Dorsolateral prefrontal cortex (tissue), 120 donors: ENCODE measurements at regions of chr22 and their contacts with region 1.

Region 1: DNA sequence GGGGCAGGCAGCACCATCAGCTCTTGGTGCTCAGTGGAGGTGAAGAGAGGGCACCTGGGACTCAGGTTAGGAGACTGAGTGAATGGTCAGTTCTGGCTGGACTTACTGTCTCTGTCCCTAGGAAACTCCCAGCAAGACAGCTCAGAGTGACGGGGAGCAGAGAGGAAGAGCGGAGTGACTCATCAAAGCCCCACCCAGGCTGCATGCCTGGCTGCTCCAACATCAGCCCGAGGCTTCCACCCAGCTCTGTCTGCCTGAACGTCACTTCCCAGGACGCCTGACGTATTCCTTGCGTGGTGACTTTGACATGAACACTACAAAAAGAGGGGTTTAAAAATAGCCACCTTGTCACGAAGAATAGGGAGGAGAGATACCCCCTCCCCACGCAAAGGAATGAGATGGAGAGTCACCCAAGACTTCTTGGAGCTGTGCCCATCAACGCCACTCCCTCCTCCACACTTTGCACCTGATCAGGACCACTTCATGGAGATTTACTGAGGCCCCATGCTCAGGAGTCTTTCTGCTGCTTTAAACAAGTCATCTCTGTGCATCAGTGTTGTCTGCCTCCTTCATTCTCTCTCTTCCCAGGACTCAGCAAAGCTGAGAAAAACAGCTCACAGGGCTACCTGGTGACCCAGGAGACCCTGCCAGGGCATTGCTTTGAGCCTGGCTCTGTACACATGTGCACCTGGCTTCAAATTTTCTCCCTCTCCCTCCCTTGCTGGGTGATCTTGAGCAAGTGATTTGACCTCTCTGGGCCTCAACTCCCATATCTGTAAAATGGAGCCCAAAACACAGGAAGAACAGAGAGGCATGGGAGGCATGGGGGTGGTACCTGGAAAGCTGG is 83.1 kb downstream of the MN1 start:
- DNase-seq: peak in 2 of 10 donors; percentile 25 to 62
- H3K4me3 ChIP-seq: no peak overlapping the region
- H3K27ac ChIP-seq: peak overlapping the region in 18 of 59 donors; percentile 24 to 91 (median 76)
- H3K27me3 ChIP-seq: peaks cover 0 to 11% (median 0%) of the 10 kb centered on the region in 45 donors
- CTCF ChIP-seq: no peak

Region 2: DNA sequence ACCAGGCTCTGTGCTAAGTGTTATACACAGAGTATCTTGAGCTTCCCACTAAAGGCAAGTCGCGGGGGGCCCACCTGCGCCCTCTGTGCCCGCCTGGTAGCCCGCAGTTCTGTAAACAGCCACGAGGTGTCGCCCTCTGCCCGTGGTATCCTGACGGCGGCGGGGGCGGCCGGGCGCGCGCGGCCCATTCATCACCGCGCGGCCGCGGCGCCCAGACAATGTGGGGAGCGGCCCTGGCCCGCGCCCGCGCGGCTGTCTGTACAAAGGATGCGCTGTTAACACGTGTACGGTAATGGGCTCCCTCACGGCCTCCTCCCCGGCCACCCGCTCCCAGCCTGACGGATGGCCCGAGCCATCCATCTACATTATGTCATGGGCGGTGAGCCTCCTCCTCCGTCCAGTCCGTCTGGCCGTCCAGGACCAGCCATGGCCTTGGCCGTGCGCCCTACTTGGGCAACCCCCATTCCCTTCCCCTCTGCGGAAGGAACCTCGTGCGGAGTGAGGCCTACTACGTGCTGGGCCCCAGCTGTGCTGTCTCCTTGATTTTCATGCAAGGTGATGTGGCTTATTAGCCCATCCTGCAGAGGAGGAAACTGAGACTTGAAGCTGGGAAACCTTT is 961.6 kb before region 1 on chr22:
- intact Hi-C with region 1: loop called in 1 of 2 experiments (anchors 5 kb)
- DNase-seq: peak in 9 of 10 donors; percentile 49 to 78 (median 67)
- H3K4me3 ChIP-seq: peak overlapping the region; percentile 4 to 64 (median 40)
- H3K27ac ChIP-seq: peak overlapping the region in 29 of 59 donors; percentile 8 to 79 (median 55)
- H3K27me3 ChIP-seq: no peaks in the 10 kb centered on the region
- CTCF ChIP-seq: peak in 55 of 56 donors; percentile 70 to 100 (median 94)

Region 3: GRCh38 chr22:27405672-27406388 is 312.6 kb before region 1 on chr22:
- intact Hi-C with region 1: loop called in 1 of 2 experiments (anchors 10 kb)
- DNase-seq: peak in 7 of 10 donors; percentile 18 to 70 (median 41)
- H3K4me3 ChIP-seq: no peak overlapping the region
- H3K27ac ChIP-seq: no peak overlapping the region
- H3K27me3 ChIP-seq: peaks cover 0 to 11% (median 0%) of the 10 kb centered on the region in 45 donors
- CTCF ChIP-seq: peak; percentile 24 to 83 (median 67)

Region 4: DNA sequence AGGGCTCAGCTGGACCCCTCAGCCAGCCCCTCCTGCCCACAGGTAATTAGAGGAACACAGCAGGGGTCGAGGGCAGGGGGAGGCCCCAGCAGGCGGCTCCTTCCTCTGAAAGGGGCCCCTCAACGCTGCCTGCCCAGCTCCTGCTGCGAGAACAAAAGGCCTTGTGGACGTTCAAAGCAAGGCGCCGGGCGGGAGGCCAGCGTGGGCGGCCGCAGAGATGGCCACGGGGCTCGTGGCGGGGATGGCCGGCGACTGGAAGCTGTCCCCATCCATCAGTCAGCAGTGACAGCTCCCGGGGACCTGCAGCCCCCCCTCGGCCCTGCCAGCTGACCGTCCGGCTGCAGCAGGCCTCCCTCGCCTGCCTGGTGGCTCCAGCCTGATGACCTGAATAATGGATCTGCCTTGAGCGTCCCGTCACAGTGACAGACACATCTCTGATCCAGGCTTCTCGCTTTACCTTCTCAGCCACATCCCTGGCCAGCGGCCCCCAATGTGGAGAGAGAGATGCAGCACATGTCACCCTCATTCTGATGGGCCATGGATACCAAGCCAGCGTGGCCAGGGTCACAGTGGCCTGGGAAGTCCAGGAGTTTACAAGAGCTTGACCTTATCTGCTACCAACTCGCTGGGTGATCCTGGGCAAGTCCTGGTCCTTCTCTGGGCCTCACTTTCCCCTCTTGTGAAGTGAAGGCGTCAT is 76.2 kb before region 1 on chr22:
- intact Hi-C with region 1: loop called (anchors 1 kb)
- DNase-seq: peak; percentile 23 to 96 (median 94)
- H3K4me3 ChIP-seq: peak overlapping the region in 1 of 59 donors; percentile 9
- H3K27ac ChIP-seq: peak overlapping the region; percentile 72 to 99 (median 95)
- H3K27me3 ChIP-seq: no peaks in the 10 kb centered on the region
- CTCF ChIP-seq: peak in 24 of 56 donors; percentile 8 to 54 (median 30)

Region 5: DNA sequence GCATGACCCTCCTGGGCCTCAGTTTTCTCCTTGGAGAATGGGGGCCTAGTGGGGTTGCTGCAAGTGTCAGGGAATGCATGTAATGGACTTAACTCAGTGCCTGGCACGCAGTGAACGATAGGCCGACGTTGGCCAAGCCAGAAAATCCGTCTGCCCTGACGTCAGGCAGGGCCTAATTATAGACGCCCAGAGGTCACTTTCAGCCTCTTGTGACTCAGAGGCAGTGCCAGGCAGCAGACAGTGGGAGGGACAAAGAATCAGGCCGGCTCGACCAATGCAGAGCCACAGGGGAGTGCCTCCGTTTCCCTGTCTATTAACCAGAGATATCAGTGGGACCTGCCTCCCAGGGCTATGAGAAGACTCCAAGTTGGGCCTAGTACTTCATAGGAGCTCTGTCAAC is 31.9 kb before region 1 on chr22:
- intact Hi-C with region 1: loop called in 1 of 2 experiments (anchors 2 kb)
- DNase-seq: peak; percentile 5 to 91 (median 88)
- H3K4me3 ChIP-seq: no peak overlapping the region
- H3K27ac ChIP-seq: peak overlapping the region; percentile 52 to 99 (median 93)
- H3K27me3 ChIP-seq: no peaks in the 10 kb centered on the region
- CTCF ChIP-seq: peak in 4 of 56 donors; percentile 7 to 47 (median 8)